PC-3 (cell line): ENCODE measurements at regions of chr2 and their contacts with region 1.

Region 1: GRCh38 chr2:179842498-179843153 is 18.8 kb downstream of the ZNF385B start:
- DNase-seq: peak; percentile 24
- ATAC-seq: no peak
- H3K4me3 ChIP-seq: no peak overlapping the region
- H3K27ac ChIP-seq: no peak overlapping the region
- H3K4me1 ChIP-seq: peaks cover 3% of the 10 kb centered on the region; the same call in 1 of the 2 replicates
- H3K27me3 ChIP-seq: no peaks in the 10 kb centered on the region
- CTCF ChIP-seq: peak; percentile 58

Region 2: GRCh38 chr2:179677077-179677688 is 165.4 kb before region 1 on chr2:
- CTCF ChIA-PET with region 1: no interaction called
- POLR2A ChIA-PET with region 1: no interaction called
- intact Hi-C with region 1: no loop called
- DNase-seq: peak; percentile 30
- ATAC-seq: peak; percentile 90
- H3K4me3 ChIP-seq: no peak overlapping the region
- H3K27ac ChIP-seq: no peak overlapping the region
- H3K4me1 ChIP-seq: 0 out of 2 replicates have a peak, but pooled peaks cover 6% of the 10 kb centered on the region
- H3K27me3 ChIP-seq: no peaks in the 10 kb centered on the region
- CTCF ChIP-seq: no peak

Region 3: GRCh38 chr2:179898873-179899272 is 56.2 kb after region 1 on chr2:
- CTCF ChIA-PET with region 1: no interaction called
- POLR2A ChIA-PET with region 1: no interaction called
- intact Hi-C with region 1: loop called (anchors 5 kb)
- DNase-seq: peak; percentile 79
- ATAC-seq: peak; percentile 93
- H3K4me3 ChIP-seq: no peak overlapping the region
- H3K27ac ChIP-seq: no peak overlapping the region
- H3K4me1 ChIP-seq: no peaks in the 10 kb centered on the region
- H3K27me3 ChIP-seq: no peaks in the 10 kb centered on the region
- CTCF ChIP-seq: peak; percentile 78

Region 4: DNA sequence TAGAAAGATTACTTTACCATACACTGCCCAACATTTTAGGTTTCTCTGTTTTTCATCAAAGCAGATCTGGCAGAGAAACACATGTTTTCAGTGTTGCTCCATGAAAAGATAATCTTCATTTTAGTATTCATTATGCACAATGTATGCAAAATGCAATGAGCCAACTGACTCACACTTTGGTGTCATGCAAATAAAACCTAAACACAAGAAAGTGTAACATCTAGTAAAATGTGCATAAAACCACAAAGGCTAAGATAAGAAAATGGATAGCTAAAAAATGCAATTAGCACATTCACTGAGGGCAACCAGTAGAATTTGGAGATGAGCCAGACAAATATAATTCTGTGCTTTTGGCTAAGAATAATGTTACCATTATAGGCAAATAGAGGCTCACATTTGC is 934.3 kb after region 1 on chr2:
- CTCF ChIA-PET with region 1: no interaction called
- POLR2A ChIA-PET with region 1: no interaction called
- intact Hi-C with region 1: no loop called
- DNase-seq: no peak
- ATAC-seq: no peak
- H3K4me3 ChIP-seq: no peak overlapping the region
- H3K27ac ChIP-seq: no peak overlapping the region
- H3K4me1 ChIP-seq: no peaks in the 10 kb centered on the region
- H3K27me3 ChIP-seq: no peaks in the 10 kb centered on the region
- CTCF ChIP-seq: no peak